Panc1 (cell line): ENCODE measurements at regions of chr19 and their contacts with region 1.

Region 1: GRCh38 chr19:50510121-50510670 is 795 bp downstream of the JOSD2 start:
- DNase-seq: no peak
- ATAC-seq: no peak
- H3K4me3 ChIP-seq: peak overlapping the region; percentile 77 to 79
- H3K27ac ChIP-seq: peak overlapping the region; percentile 92
- H3K4me1 ChIP-seq: no peaks in the 10 kb centered on the region
- H3K27me3 ChIP-seq: no peaks in the 10 kb centered on the region
- CTCF ChIP-seq: no peak

Region 2: DNA sequence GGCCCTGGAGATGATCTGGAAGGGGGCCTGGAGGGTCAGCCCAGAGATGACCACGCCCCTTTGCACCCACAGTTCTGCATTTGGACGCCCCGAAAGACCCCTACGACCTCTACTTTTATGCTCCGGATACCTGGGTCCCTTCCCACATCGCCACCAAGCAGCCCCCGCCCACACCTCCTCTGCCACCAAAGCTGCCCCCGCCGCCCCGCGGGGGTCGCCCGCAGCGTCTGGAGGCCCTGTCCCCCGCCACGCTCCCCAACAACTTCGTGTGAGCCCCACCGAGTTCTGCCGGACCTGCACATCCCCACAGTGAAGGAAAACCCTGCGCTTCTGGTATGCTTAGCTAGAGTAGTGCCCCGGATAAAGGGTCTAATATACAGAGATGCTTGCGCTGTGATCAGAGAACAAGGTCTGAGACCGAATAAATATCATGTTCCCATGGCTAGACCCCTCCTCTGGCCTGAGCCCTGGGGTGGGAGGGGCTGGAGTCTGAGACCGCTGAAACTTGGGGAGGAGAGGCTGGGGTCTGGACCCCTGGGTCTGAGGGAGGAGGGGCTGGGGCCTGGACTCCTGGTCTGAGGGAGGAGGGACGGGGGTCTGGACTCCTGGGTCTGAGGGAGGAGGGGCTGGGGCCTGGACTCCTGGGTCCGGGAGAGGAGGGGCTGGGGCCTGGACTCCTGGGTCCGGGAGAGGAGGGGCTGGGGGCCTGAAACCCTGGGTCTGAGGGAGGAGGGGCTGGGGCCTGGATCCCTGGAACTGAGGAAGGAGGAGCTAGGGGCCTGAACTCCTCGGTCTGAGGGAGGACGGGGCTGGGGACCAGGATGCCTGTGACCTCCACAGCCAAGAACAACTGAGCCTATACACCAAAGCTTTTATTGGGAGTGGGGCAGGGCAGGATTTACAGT is 1081.4 kb before region 1 on chr19:
- CTCF ChIA-PET with region 1: no interaction called
- POLR2A ChIA-PET with region 1: interaction called, 10 read pairs
- in situ Hi-C with region 1: no loop called
- intact Hi-C with region 1: no loop called
- DNase-seq: no peak
- ATAC-seq: no peak
- H3K4me3 ChIP-seq: no peak overlapping the region
- H3K27ac ChIP-seq: no peak overlapping the region
- H3K4me1 ChIP-seq: no peaks in the 10 kb centered on the region; the same call in 1 of the 2 replicates
- H3K27me3 ChIP-seq: no peaks in the 10 kb centered on the region; the same call in 1 of the 2 replicates
- CTCF ChIP-seq: no peak

Region 3: GRCh38 chr19:50272263-50272897 is 237.8 kb before region 1 on chr19:
- CTCF ChIA-PET with region 1: no interaction called
- POLR2A ChIA-PET with region 1: no interaction called
- in situ Hi-C with region 1: no loop called
- intact Hi-C with region 1: no loop called
- DNase-seq: no peak
- ATAC-seq: no peak
- H3K4me3 ChIP-seq: no peak overlapping the region
- H3K27ac ChIP-seq: no peak overlapping the region
- H3K4me1 ChIP-seq: no peaks in the 10 kb centered on the region
- H3K27me3 ChIP-seq: no peaks in the 10 kb centered on the region
- CTCF ChIP-seq: no peak

Region 4: GRCh38 chr19:50460161-50460765 is 49.9 kb before region 1 on chr19:
- CTCF ChIA-PET with region 1: no interaction called
- POLR2A ChIA-PET with region 1: interaction called, 12 read pairs
- in situ Hi-C with region 1: no loop called
- intact Hi-C with region 1: no loop called
- DNase-seq: no peak
- ATAC-seq: peak; percentile 79
- H3K4me3 ChIP-seq: peak overlapping the region in 1 of 2 experiments; percentile 7; a peak in 1 of 4 replicates
- H3K27ac ChIP-seq: 0 out of 2 replicates have a peak overlapping the region, but pooled peaks have one; percentile 24
- H3K4me1 ChIP-seq: no peaks in the 10 kb centered on the region; the same call in none of the 2 replicates
- H3K27me3 ChIP-seq: no peaks in the 10 kb centered on the region
- CTCF ChIP-seq: no peak